ENCODE measurements at regions of chr1 and their contacts with region 1.

Region 1: DNA sequence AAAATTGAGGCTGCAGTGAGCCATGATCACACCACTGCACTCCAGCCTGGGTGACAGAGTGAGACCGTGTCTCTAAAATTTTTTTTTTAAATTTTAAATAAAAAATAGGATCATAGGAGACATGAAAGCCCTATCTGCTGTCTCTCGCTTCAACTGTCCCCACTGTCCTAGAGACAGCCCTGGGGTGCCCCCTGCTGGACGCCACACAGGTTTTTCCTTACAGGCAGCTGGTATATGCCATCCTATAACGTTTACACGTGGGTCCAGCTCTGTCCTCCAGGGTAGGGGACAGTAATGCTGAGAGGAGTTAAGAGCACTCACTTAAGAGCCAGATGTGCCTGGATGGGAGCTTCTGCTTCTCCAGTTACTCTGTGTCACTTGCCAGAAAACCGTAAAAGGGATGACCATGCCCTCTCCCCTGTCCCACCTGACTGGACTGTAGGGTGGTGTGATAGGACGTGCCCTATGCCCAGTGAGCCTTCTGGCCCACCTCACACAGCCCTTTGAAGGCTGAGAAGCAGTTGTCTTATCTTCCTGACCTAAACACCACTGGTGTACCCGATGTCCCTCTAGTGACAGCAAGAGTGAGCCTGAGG is 8.5 kb downstream of the FBXO2 start:
- DNase-seq: peak; percentile 83 to 93 (median 89)
- H3K4me3 ChIP-seq: no peak overlapping the region
- H3K27ac ChIP-seq: peak overlapping the region in 32 of 59 donors; percentile 3 to 98 (median 85)
- H3K27me3 ChIP-seq: no peaks in the 10 kb centered on the region
- CTCF ChIP-seq: peak; percentile 45 to 90 (median 82)

Region 2: DNA sequence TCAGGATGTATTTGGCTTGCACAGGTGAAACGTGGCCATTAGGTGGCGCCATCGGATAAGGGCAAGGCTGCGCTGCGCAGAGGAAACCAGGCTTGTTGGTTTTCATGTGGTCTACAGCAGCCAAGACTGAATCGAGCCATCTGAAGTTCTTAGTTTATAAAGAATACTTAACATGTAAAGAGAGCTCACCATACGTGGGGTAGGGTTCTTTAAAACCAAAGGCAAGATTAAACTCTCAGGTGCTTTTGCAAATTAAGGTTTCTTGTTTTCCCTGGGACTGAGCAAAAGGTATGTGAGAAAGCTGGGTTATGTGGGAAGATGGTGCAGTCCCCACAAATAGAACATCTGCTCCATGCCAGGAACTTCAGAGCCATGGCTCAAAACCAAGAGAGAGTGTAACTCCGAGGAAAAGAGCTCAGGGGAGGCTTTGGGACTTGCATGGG is 608.0 kb before region 1 on chr1:
- intact Hi-C with region 1: loop called (anchors 2 to 5 kb)
- DNase-seq: peak; percentile 82 to 94 (median 88)
- H3K4me3 ChIP-seq: no peak overlapping the region
- H3K27ac ChIP-seq: peak overlapping the region in 1 of 59 donors; percentile 44
- H3K27me3 ChIP-seq: no peaks in the 10 kb centered on the region
- CTCF ChIP-seq: peak; percentile 75 to 99 (median 96)

Region 3: GRCh38 chr1:11256299-11256698 is 389.5 kb before region 1 on chr1:
- intact Hi-C with region 1: loop called in 1 of 2 experiments (anchors 5 kb)
- DNase-seq: no peak
- H3K4me3 ChIP-seq: no peak overlapping the region
- H3K27ac ChIP-seq: no peak overlapping the region
- H3K27me3 ChIP-seq: no peaks in the 10 kb centered on the region
- CTCF ChIP-seq: no peak

Region 4: GRCh38 chr1:11285883-11286734 is 359.7 kb before region 1 on chr1:
- intact Hi-C with region 1: loop called in 1 of 2 experiments (anchors 10 kb)
- DNase-seq: peak in 1 of 10 donors; percentile 42
- H3K4me3 ChIP-seq: no peak overlapping the region
- H3K27ac ChIP-seq: peak overlapping the region in 3 of 59 donors; percentile 7 to 27 (median 8)
- H3K27me3 ChIP-seq: no peaks in the 10 kb centered on the region
- CTCF ChIP-seq: peak in 49 of 56 donors; percentile 24 to 63 (median 41)

Region 5: DNA sequence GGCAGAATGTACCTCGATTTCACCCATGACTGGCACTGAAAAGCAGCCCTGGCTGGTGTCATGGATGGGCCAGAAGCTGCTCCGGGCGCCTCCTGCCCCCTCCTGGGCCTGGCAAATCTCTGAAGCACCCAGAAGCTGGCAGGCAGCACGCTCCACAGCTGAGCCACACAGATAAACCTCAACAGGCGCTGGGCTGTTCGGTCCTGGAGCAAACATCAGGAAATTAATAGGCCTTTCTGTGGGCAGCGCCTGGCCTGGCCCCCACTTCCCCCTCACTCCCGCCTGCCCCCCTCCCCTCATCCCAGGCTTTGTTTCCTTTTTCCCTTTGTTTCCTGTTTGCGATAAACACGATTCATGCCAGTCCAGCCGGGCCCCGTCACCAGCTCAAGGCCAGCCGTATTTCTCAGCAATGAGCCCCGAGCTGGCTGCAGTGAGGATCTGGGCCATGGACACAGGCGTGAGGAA is 186.9 kb before region 1 on chr1:
- intact Hi-C with region 1: loop called in 1 of 2 experiments (anchors 5 kb)
- DNase-seq: peak; percentile 21 to 93 (median 88)
- H3K4me3 ChIP-seq: peak overlapping the region in 3 of 59 donors; percentile 1 to 18 (median 2)
- H3K27ac ChIP-seq: peak overlapping the region; percentile 3 to 93 (median 84)
- H3K27me3 ChIP-seq: peaks cover 0 to 5% (median 0%) of the 10 kb centered on the region in 45 donors
- CTCF ChIP-seq: peak in 46 of 56 donors; percentile 16 to 63 (median 40)

Region 6: DNA sequence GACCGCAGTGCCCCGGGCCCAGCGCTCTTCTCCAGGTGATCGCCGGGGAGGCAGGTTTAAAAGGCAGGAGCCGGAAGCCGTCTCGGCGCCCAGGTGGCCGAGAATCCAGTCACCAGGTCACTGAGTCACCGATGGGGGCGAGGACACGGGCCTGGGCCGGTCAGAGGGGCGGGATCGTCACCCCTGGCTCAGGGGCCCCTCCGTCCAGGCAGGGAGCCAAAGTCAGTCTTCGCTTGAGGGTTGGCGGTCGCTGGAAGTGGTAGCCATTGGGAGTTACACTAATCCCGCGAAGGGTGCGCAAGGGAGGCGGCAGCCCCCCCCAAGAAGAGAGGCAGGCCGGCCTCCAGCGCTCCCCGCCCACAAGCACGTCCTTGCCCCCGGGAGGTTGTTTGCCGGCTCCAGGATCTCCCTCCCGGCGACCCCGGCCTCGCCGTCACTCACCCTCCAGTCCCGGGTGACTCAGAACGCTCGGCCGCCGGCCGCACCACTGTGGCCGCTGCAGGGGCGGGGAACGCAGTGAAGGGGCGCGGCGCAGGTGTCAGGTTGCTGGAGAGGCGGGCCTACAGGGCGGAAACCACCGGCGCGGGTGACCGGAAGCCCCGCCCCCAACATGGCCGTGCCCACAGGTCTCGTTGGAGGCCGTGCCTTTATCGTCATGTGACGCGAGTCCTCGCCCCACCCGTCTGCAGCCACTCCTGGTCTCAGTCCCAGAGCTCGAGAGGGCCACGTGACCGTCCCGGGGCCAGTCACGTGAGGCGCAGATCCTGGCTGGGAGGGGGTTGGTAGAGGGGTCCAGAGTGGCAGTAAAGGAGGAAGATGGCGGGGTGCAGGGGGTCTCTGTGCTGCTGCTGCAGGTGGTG is 159.9 kb after region 1 on chr1 and contains the starts of genes CLCN6 and MTHFR:
- intact Hi-C with region 1: loop called (anchors 5 to 10 kb)
- DNase-seq: peak; percentile 99
- H3K4me3 ChIP-seq: peak within 1 kb of the TSS; percentile 61 to 100 (median 93)
- H3K27ac ChIP-seq: peak within 1 kb of the TSS; percentile 88 to 99 (median 95)
- H3K27me3 ChIP-seq: no peaks in the 10 kb centered on the region
- CTCF ChIP-seq: peak in 16 of 56 donors; percentile 4 to 40 (median 22)
- total RNA-seq, gene CLCN6: 51.7 to 92.9 (median 69.7) TPM
- total RNA-seq, gene MTHFR: 31.4 to 70.6 (median 41.5) TPM

Measured in dorsolateral prefrontal cortex (tissue), 120 donors.